Panc1 (cell line): ENCODE measurements at regions of chr10 and their contacts with region 1.

Region 1: GRCh38 chr10:114083040-114083439 is 39.4 kb downstream of the ADRB1 start:
- DNase-seq: no peak
- ATAC-seq: peak; percentile 56
- H3K4me3 ChIP-seq: no peak overlapping the region
- H3K27ac ChIP-seq: no peak overlapping the region; the same call in 1 of the 2 replicates
- H3K4me1 ChIP-seq: peaks cover 6% of the 10 kb centered on the region; the same call in 1 of the 2 replicates
- H3K27me3 ChIP-seq: no peaks in the 10 kb centered on the region
- CTCF ChIP-seq: no peak

Region 2: DNA sequence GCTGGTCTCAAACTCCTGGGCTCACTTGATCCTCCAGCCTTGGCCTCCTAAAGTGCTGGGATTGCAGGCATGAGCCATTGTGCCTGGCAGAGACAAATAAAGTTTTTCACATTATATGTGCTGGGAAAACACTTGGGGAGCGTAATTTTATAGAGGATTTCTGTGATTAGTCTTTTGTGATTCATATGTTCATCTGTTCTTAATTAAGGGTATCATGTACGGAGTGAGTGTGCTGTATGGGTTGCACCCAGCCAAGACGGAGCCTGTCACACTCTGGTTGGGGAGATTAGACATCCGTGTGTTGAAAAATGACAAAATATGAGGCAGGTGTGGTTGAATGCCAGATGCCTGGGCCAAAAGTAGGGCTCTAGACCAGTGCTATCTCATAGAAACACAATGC is 29.1 kb before region 1 on chr10:
- CTCF ChIA-PET with region 1: no interaction called
- POLR2A ChIA-PET with region 1: interaction called, 10 read pairs
- in situ Hi-C with region 1: no loop called
- intact Hi-C with region 1: no loop called
- DNase-seq: no peak
- ATAC-seq: no peak
- H3K4me3 ChIP-seq: no peak overlapping the region
- H3K27ac ChIP-seq: no peak overlapping the region; the same call in 1 of the 2 replicates
- H3K4me1 ChIP-seq: peaks cover 24% of the 10 kb centered on the region
- H3K27me3 ChIP-seq: no peaks in the 10 kb centered on the region
- CTCF ChIP-seq: no peak

Region 3: GRCh38 chr10:114068054-114068707 is 14.9 kb before region 1 on chr10:
- CTCF ChIA-PET with region 1: interaction called, 3 read pairs
- POLR2A ChIA-PET with region 1: interaction called, 14 read pairs
- in situ Hi-C with region 1: no loop called
- intact Hi-C with region 1: no loop called
- DNase-seq: no peak
- ATAC-seq: peak; percentile 62
- H3K4me3 ChIP-seq: no peak overlapping the region; a peak in 1 of 4 replicates
- H3K27ac ChIP-seq: peak overlapping the region; percentile 36; the same call in 1 of the 2 replicates
- H3K4me1 ChIP-seq: 0 out of 2 replicates have a peak, but pooled peaks cover 11% of the 10 kb centered on the region
- H3K27me3 ChIP-seq: no peaks in the 10 kb centered on the region
- CTCF ChIP-seq: no peak

Region 4: GRCh38 chr10:114095559-114096337 is 12.7 kb after region 1 on chr10:
- CTCF ChIA-PET with region 1: no interaction called
- POLR2A ChIA-PET with region 1: no interaction called
- in situ Hi-C with region 1: no loop called
- intact Hi-C with region 1: no loop called
- DNase-seq: no peak
- ATAC-seq: no peak
- H3K4me3 ChIP-seq: no peak overlapping the region
- H3K27ac ChIP-seq: no peak overlapping the region
- H3K4me1 ChIP-seq: peaks cover 6% of the 10 kb centered on the region
- H3K27me3 ChIP-seq: no peaks in the 10 kb centered on the region
- CTCF ChIP-seq: no peak

Region 5: DNA sequence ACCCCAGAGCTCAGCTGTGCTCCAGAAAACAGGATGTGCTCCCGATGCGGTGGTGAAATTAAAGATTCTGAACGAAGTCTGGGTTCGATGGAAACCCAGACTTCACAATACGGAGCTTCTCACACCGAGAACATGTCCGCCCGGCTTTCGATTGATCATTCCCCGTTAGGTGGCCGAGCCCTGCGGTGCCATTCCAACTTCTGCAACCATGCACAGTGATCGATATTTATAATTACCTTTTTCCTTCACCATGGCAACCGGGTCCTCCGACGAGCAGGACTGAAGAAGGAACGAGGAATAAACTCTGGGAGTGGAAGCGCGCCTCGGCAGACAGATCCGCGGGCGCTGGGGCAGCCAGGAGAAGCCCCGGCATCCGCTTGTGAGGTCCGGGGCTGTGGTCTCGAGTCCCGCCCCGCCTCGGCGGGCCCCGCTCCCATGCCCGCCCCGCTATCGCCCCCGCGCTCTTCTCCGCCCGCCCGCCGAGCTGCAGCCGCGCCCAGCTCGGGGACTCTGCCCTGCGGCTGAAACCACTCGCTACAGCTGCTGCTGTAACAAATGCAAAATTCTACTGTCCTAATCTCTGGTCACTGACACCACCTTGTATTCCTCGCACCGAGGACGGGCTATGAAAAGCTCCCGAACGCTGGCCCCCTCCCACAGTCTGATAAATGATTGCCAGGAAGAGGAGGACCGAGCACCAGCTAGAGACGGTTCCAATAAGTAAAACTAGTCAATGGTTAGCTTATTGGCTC is 548.8 kb after region 1 on chr10:
- CTCF ChIA-PET with region 1: no interaction called
- POLR2A ChIA-PET with region 1: no interaction called
- in situ Hi-C with region 1: no loop called
- intact Hi-C with region 1: no loop called
- DNase-seq: no peak
- ATAC-seq: peak; percentile 36
- H3K4me3 ChIP-seq: peak overlapping the region; percentile 73 to 78
- H3K27ac ChIP-seq: peak overlapping the region; percentile 96
- H3K4me1 ChIP-seq: peaks cover 83% of the 10 kb centered on the region
- H3K27me3 ChIP-seq: no peaks in the 10 kb centered on the region
- CTCF ChIP-seq: no peak